ENCODE measurements at regions of chr14 and their contacts with region 1.

Region 1: GRCh38 chr14:93115069-93115820 is 480 bp downstream of the ITPK1 start:
- DNase-seq: peak; percentile 80 to 89 (median 87)
- H3K4me3 ChIP-seq: peak overlapping the region in 1 of 2 donors; percentile 72
- H3K4me3 Mint-ChIP-seq: peak overlapping the region; percentile 51 to 92 (median 88)
- H3K27ac ChIP-seq: peak overlapping the region; percentile 64
- H3K27ac Mint-ChIP-seq: peak overlapping the region in 4 of 7 donors; percentile 66 to 90 (median 78)
- H3K4me1 ChIP-seq: peaks cover 38% of the 10 kb centered on the region
- H3K4me1 Mint-ChIP-seq: peaks cover 19 to 29% (median 21%) of the 10 kb centered on the region in 4 donors
- H3K27me3 ChIP-seq: no peaks in the 10 kb centered on the region
- H3K27me3 Mint-ChIP-seq: no peaks in the 10 kb centered on the region

Region 2: GRCh38 chr14:92793709-92794546 is 321.3 kb before region 1 on chr14 and contains the start of gene GOLGA5:
- CTCF ChIA-PET with region 1: no interaction called
- POLR2A ChIA-PET with region 1: interaction called, 3 read pairs
- intact Hi-C with region 1: loop called (anchors 1 kb)
- DNase-seq: peak; percentile 97 to 100 (median 99)
- H3K4me3 ChIP-seq: peak within 1 kb of the TSS; percentile 67 to 94
- H3K4me3 Mint-ChIP-seq: peak within 1 kb of the TSS; percentile 84 to 98 (median 96)
- H3K27ac ChIP-seq: peak within 1 kb of the TSS; percentile 85
- H3K27ac Mint-ChIP-seq: peak within 1 kb of the TSS; percentile 77 to 98 (median 95)
- H3K4me1 ChIP-seq: peaks cover 30% of the 10 kb centered on the region
- H3K4me1 Mint-ChIP-seq: peaks cover 26 to 46% (median 35%) of the 10 kb centered on the region in 4 donors
- H3K27me3 ChIP-seq: no peaks in the 10 kb centered on the region
- H3K27me3 Mint-ChIP-seq: no peaks in the 10 kb centered on the region
- total RNA-seq, gene GOLGA5: 27.4 to 29.8 TPM

Region 3: GRCh38 chr14:93103392-93104080 is 11.7 kb before region 1 on chr14:
- CTCF ChIA-PET with region 1: interaction called, 129 read pairs
- POLR2A ChIA-PET with region 1: interaction called, 13 read pairs
- intact Hi-C with region 1: loop called (anchors 1 kb)
- DNase-seq: peak; percentile 55 to 83 (median 66)
- H3K4me3 ChIP-seq: peak overlapping the region; percentile 9 to 30
- H3K4me3 Mint-ChIP-seq: peak overlapping the region; percentile 85 to 94 (median 88)
- H3K27ac ChIP-seq: peak overlapping the region; percentile 62
- H3K27ac Mint-ChIP-seq: peak overlapping the region; percentile 90 to 97 (median 93)
- H3K4me1 ChIP-seq: peaks cover 19% of the 10 kb centered on the region
- H3K4me1 Mint-ChIP-seq: peaks cover 11 to 45% (median 24%) of the 10 kb centered on the region in 4 donors
- H3K27me3 ChIP-seq: no peaks in the 10 kb centered on the region
- H3K27me3 Mint-ChIP-seq: no peaks in the 10 kb centered on the region

Region 4: GRCh38 chr14:93137864-93138263 is 22.6 kb after region 1 on chr14:
- CTCF ChIA-PET with region 1: interaction called, 105 read pairs
- POLR2A ChIA-PET with region 1: interaction called, 11 read pairs
- intact Hi-C with region 1: loop called (anchors 1 kb)
- DNase-seq: no peak
- H3K4me3 ChIP-seq: no peak overlapping the region
- H3K4me3 Mint-ChIP-seq: no peak overlapping the region
- H3K27ac ChIP-seq: no peak overlapping the region
- H3K27ac Mint-ChIP-seq: peak overlapping the region in 1 of 7 donors; percentile 48
- H3K4me1 ChIP-seq: no peaks in the 10 kb centered on the region
- H3K4me1 Mint-ChIP-seq: peaks cover 0 to 5% (median 2%) of the 10 kb centered on the region in 4 donors
- H3K27me3 ChIP-seq: no peaks in the 10 kb centered on the region
- H3K27me3 Mint-ChIP-seq: peaks cover 0 to 2% of the 10 kb centered on the region in 2 donors

Region 5: DNA sequence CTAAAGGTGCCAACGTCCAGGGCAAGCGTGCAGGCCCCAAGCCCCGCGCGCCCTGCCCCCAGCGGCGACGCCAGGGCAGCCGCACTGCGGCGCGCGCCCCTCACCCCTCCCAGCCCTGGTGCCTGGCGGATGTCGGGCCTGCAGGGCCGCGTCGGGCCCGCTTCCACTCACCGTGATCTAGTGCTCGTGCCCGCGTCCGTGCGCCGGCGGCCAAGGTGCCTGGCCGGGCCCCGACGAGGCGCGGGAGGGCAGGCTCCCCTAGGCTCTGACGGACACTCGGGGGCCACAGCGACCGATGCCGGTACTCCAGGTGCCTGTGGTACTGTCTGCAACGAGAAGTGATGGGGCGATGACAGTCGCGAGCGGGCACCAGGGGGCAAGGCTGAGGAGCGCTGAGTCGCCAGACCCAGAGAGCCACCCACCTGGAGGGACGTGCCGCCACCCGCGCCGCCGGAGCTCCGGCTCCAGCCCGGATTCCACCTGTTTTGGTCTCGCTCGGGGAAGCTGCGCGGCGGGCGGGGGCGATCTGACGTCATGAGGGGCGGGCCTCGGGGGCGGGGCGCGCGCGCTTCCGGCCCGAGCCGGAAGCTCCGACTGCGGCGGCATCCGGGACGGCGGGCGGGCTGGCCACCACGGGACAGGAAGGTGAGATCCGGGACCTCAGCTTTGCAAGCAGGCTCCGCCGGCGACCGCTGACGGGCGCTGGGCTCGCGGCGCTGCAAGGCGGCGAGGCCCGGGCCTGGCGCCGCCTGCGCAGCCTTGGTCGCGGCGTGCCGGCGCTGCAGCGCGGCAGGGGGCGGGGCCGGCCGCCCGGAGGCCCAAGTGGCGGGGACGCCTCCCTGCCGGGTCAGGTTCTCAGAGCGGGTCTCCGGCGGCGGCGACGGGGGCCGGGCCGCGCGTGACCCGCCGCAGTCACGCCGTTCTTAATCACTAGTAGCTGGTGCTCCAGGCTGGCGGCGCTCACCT is 69.4 kb after region 1 on chr14 and contains the starts of genes LYSET and MOAP1:
- CTCF ChIA-PET with region 1: interaction called, 32 read pairs
- POLR2A ChIA-PET with region 1: interaction called, 51 read pairs
- intact Hi-C with region 1: loop called (anchors 2 kb)
- DNase-seq: peak; percentile 91 to 94 (median 93)
- H3K4me3 ChIP-seq: peak within 1 kb of the TSS; percentile 82 to 93
- H3K4me3 Mint-ChIP-seq: peak within 1 kb of the TSS; percentile 89 to 97 (median 94)
- H3K27ac ChIP-seq: peak within 1 kb of the TSS; percentile 98
- H3K27ac Mint-ChIP-seq: peak within 1 kb of the TSS; percentile 92 to 98 (median 97)
- H3K4me1 ChIP-seq: peaks cover 37% of the 10 kb centered on the region
- H3K4me1 Mint-ChIP-seq: peaks cover 29 to 41% (median 37%) of the 10 kb centered on the region in 4 donors
- H3K27me3 ChIP-seq: no peaks in the 10 kb centered on the region
- H3K27me3 Mint-ChIP-seq: no peaks in the 10 kb centered on the region
- total RNA-seq, gene LYSET: 20.2 to 24.0 TPM
- total RNA-seq, gene MOAP1: 39.0 to 39.9 TPM

Region 6: GRCh38 chr14:93332853-93333630 is 217.8 kb after region 1 on chr14 and contains the start of gene BTBD7:
- CTCF ChIA-PET with region 1: interaction called, 4 read pairs
- POLR2A ChIA-PET with region 1: no interaction called
- intact Hi-C with region 1: loop called (anchors 5 kb)
- DNase-seq: peak; percentile 92 to 94 (median 93)
- H3K4me3 ChIP-seq: peak within 1 kb of the TSS; percentile 59 to 96
- H3K4me3 Mint-ChIP-seq: peak within 1 kb of the TSS; percentile 92 to 98 (median 94)
- H3K27ac ChIP-seq: peak within 1 kb of the TSS; percentile 83
- H3K27ac Mint-ChIP-seq: peak within 1 kb of the TSS; percentile 92 to 97 (median 96)
- H3K4me1 ChIP-seq: peaks cover 32% of the 10 kb centered on the region
- H3K4me1 Mint-ChIP-seq: peaks cover 33 to 59% (median 39%) of the 10 kb centered on the region in 4 donors
- H3K27me3 ChIP-seq: no peaks in the 10 kb centered on the region
- H3K27me3 Mint-ChIP-seq: no peaks in the 10 kb centered on the region
- total RNA-seq, gene BTBD7: 30.3 to 38.3 TPM

Measured in CD4-positive, alpha-beta memory T cell (primary cell).